Activated CD8-positive, alpha-beta T cell treated with anti-CD3 and anti-CD28 coated beads for 36 hours (primary cell): ENCODE measurements at regions of chr15 and their contacts with region 1.

Region 1: GRCh38 chr15:92797168-92797951 is 102.8 kb upstream of the CHD2 start:
- DNase-seq: peak; percentile 46
- ATAC-seq: peak; percentile 93
- H3K4me3 Mint-ChIP-seq: no peak overlapping the region
- H3K27ac Mint-ChIP-seq: peak overlapping the region; percentile 31
- H3K4me1 Mint-ChIP-seq: peaks cover 4% of the 10 kb centered on the region
- H3K27me3 Mint-ChIP-seq: no peaks in the 10 kb centered on the region
- CTCF ChIP-seq: peak; percentile 88

Region 2: GRCh38 chr15:92463826-92464225 is 333.5 kb before region 1 on chr15:
- CTCF ChIA-PET with region 1: no interaction called
- POLR2A ChIA-PET with region 1: no interaction called
- intact Hi-C with region 1: no loop called
- DNase-seq: no peak
- ATAC-seq: no peak
- H3K4me3 Mint-ChIP-seq: no peak overlapping the region
- H3K27ac Mint-ChIP-seq: no peak overlapping the region
- H3K4me1 Mint-ChIP-seq: no peaks in the 10 kb centered on the region
- H3K27me3 Mint-ChIP-seq: no peaks in the 10 kb centered on the region
- CTCF ChIP-seq: no peak

Region 3: GRCh38 chr15:92808978-92809879 is 11.9 kb after region 1 on chr15:
- CTCF ChIA-PET with region 1: interaction called, 18 read pairs
- POLR2A ChIA-PET with region 1: interaction called, 3 read pairs
- intact Hi-C with region 1: no loop called
- DNase-seq: peak; percentile 99
- ATAC-seq: peak; percentile 84
- H3K4me3 Mint-ChIP-seq: peak overlapping the region; percentile 82
- H3K27ac Mint-ChIP-seq: peak overlapping the region; percentile 99
- H3K4me1 Mint-ChIP-seq: peaks cover 40% of the 10 kb centered on the region
- H3K27me3 Mint-ChIP-seq: no peaks in the 10 kb centered on the region
- CTCF ChIP-seq: peak; percentile 92

Region 4: DNA sequence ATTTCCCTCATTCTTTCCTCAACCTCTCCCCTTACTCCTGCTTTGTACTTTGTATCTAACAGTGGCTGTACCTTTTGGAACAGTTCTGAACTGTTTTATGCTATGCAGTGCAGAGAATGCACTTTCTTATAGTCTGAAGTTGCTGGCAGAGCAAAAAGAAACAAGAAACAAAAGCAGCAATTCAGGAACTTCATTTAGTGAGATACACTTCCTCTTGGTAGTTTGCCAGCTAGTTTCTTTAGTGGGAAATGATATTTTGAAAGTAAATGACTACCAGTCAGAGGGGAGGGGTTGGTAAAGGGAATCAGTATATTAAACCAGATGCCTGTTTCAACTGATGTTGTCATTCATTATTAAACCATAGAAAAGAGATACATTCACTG is 47.8 kb after region 1 on chr15:
- CTCF ChIA-PET with region 1: no interaction called
- POLR2A ChIA-PET with region 1: no interaction called
- intact Hi-C with region 1: no loop called
- DNase-seq: no peak
- ATAC-seq: peak; percentile 28
- H3K4me3 Mint-ChIP-seq: peak overlapping the region; percentile 47
- H3K27ac Mint-ChIP-seq: peak overlapping the region; percentile 91
- H3K4me1 Mint-ChIP-seq: peaks cover 73% of the 10 kb centered on the region
- H3K27me3 Mint-ChIP-seq: no peaks in the 10 kb centered on the region
- CTCF ChIP-seq: no peak

Region 5: DNA sequence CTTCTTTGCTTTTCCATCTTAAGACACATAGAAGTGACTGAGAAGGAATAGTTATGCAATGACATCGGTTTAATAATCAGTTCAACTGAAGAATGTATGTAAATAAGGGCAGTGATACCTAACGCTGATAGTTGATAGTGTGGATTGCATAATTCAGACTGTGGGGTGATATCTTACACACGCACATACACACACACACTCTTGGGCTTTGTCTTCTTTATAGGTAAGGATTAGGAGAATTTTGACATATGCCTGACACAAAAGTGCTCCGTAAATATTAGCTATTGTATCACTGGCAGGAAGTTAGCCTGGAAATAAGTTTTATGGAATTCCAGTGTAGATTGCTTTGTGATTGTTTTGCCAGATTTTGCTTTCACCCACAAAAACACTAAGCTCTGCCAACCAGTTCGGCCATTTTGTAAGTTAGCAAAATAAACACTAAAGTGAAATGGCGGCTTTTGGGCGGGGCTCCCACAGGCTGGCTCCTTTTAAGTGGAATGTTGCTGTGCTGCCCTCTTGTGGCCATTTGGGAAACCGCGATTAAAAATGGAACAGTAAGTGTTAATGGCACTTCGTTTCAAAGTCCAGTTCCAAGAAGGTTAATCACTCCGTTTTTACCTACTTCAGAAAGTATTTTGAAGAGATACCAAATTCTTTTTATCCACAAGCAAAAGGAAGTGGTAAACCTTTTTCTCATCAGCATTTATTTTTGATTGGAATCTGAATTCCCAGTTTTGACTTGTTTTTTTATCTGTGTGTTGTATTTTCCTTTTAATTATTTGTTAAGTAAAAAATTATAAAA is 120.4 kb after region 1 on chr15:
- CTCF ChIA-PET with region 1: interaction called, 38 read pairs
- POLR2A ChIA-PET with region 1: no interaction called
- intact Hi-C with region 1: no loop called
- DNase-seq: peak; percentile 99
- ATAC-seq: peak; percentile 34
- H3K4me3 Mint-ChIP-seq: no peak overlapping the region
- H3K27ac Mint-ChIP-seq: peak overlapping the region; percentile 87
- H3K4me1 Mint-ChIP-seq: peaks cover 78% of the 10 kb centered on the region
- H3K27me3 Mint-ChIP-seq: no peaks in the 10 kb centered on the region
- CTCF ChIP-seq: peak; percentile 91

Region 6: DNA sequence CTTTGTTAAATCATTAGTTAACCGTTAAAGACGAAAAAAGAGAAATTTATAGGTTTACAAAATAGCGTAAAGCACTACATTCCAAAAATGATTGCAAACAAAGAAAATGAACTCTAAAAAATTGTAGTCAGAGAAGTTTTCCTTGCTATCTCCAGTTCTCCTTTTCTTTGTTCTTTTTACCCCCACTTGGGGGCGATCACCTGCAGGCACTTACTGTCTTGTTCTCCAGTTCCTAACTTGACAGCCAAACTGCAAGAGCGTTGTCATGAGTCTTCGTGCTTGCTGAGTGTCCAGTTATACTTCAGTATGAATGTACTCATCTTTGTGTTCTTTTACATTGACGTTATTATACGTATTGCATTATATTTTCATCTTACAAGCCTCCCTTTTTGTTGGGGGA is 157.2 kb after region 1 on chr15:
- CTCF ChIA-PET with region 1: interaction called, 13 read pairs
- POLR2A ChIA-PET with region 1: interaction called, 3 read pairs
- intact Hi-C with region 1: no loop called
- DNase-seq: peak; percentile 17
- ATAC-seq: no peak
- H3K4me3 Mint-ChIP-seq: no peak overlapping the region
- H3K27ac Mint-ChIP-seq: no peak overlapping the region
- H3K4me1 Mint-ChIP-seq: peaks cover 30% of the 10 kb centered on the region
- H3K27me3 Mint-ChIP-seq: no peaks in the 10 kb centered on the region
- CTCF ChIP-seq: peak; percentile 54

Region 7: GRCh38 chr15:93030430-93031105 is 233.2 kb after region 1 on chr15:
- CTCF ChIA-PET with region 1: interaction called, 37 read pairs
- POLR2A ChIA-PET with region 1: no interaction called
- intact Hi-C with region 1: loop called (anchors 5 kb)
- DNase-seq: peak; percentile 79
- ATAC-seq: peak; percentile 88
- H3K4me3 Mint-ChIP-seq: no peak overlapping the region
- H3K27ac Mint-ChIP-seq: no peak overlapping the region
- H3K4me1 Mint-ChIP-seq: peaks cover 36% of the 10 kb centered on the region
- H3K27me3 Mint-ChIP-seq: no peaks in the 10 kb centered on the region
- CTCF ChIP-seq: peak; percentile 91

Region 8: GRCh38 chr15:93288728-93289294 is 491.5 kb after region 1 on chr15:
- CTCF ChIA-PET with region 1: no interaction called
- POLR2A ChIA-PET with region 1: no interaction called
- intact Hi-C with region 1: no loop called
- DNase-seq: no peak
- ATAC-seq: no peak
- H3K4me3 Mint-ChIP-seq: no peak overlapping the region
- H3K27ac Mint-ChIP-seq: no peak overlapping the region
- H3K4me1 Mint-ChIP-seq: no peaks in the 10 kb centered on the region
- H3K27me3 Mint-ChIP-seq: peaks cover 11% of the 10 kb centered on the region
- CTCF ChIP-seq: no peak